CD4-positive, alpha-beta T cell (primary cell): ENCODE measurements at regions of chr16 and their contacts with region 1.

Region 1: GRCh38 chr16:11619327-11619851 is 32.7 kb upstream of the LITAF start:
- DNase-seq: peak in 12 of 14 experiments; percentile 10 to 82 (median 36)
- ATAC-seq: peak; percentile 40
- H3K4me3 ChIP-seq: peak overlapping the region; percentile 1
- H3K4me3 Mint-ChIP-seq: peak overlapping the region; percentile 78
- H3K27ac ChIP-seq: peak overlapping the region; percentile 51 to 62
- H3K27ac Mint-ChIP-seq: peak overlapping the region; percentile 99
- H3K4me1 ChIP-seq: peaks cover 76% of the 10 kb centered on the region
- H3K4me1 Mint-ChIP-seq: peaks cover 63% of the 10 kb centered on the region
- H3K27me3 ChIP-seq: no peaks in the 10 kb centered on the region
- H3K27me3 Mint-ChIP-seq: no peaks in the 10 kb centered on the region
- CTCF ChIP-seq: no peak

Region 2: GRCh38 chr16:11560701-11561449 is 58.5 kb before region 1 on chr16:
- CTCF ChIA-PET with region 1: interaction called, 3 read pairs
- POLR2A ChIA-PET with region 1: interaction called, 24 read pairs
- intact Hi-C with region 1: loop called (anchors 1 to 5 kb)
- DNase-seq: peak; percentile 58 to 93 (median 67)
- ATAC-seq: peak; percentile 86
- H3K4me3 ChIP-seq: peak overlapping the region; percentile 53
- H3K4me3 Mint-ChIP-seq: peak overlapping the region; percentile 49
- H3K27ac ChIP-seq: peak overlapping the region; percentile 86 to 87
- H3K27ac Mint-ChIP-seq: peak overlapping the region; percentile 94
- H3K4me1 ChIP-seq: peaks cover 90% of the 10 kb centered on the region
- H3K4me1 Mint-ChIP-seq: peaks cover 83% of the 10 kb centered on the region
- H3K27me3 ChIP-seq: no peaks in the 10 kb centered on the region
- H3K27me3 Mint-ChIP-seq: no peaks in the 10 kb centered on the region
- CTCF ChIP-seq: no peak

Region 3: GRCh38 chr16:11586856-11587642 is 32.3 kb before region 1 on chr16 and contains the start of gene LITAF:
- CTCF ChIA-PET with region 1: no interaction called
- POLR2A ChIA-PET with region 1: interaction called, 55 read pairs
- intact Hi-C with region 1: loop called (anchors 1 to 5 kb)
- DNase-seq: peak; percentile 22 to 73 (median 52)
- ATAC-seq: peak; percentile 45
- H3K4me3 ChIP-seq: peak within 1 kb of the TSS; percentile 96
- H3K4me3 Mint-ChIP-seq: peak within 1 kb of the TSS; percentile 95
- H3K27ac ChIP-seq: peak within 1 kb of the TSS; percentile 80 to 82
- H3K27ac Mint-ChIP-seq: peak within 1 kb of the TSS; percentile 97
- H3K4me1 ChIP-seq: peaks cover 48% of the 10 kb centered on the region
- H3K4me1 Mint-ChIP-seq: peaks cover 53% of the 10 kb centered on the region
- H3K27me3 ChIP-seq: no peaks in the 10 kb centered on the region
- H3K27me3 Mint-ChIP-seq: no peaks in the 10 kb centered on the region
- CTCF ChIP-seq: no peak
- total RNA-seq, gene LITAF: 226 to 257 TPM

Region 4: DNA sequence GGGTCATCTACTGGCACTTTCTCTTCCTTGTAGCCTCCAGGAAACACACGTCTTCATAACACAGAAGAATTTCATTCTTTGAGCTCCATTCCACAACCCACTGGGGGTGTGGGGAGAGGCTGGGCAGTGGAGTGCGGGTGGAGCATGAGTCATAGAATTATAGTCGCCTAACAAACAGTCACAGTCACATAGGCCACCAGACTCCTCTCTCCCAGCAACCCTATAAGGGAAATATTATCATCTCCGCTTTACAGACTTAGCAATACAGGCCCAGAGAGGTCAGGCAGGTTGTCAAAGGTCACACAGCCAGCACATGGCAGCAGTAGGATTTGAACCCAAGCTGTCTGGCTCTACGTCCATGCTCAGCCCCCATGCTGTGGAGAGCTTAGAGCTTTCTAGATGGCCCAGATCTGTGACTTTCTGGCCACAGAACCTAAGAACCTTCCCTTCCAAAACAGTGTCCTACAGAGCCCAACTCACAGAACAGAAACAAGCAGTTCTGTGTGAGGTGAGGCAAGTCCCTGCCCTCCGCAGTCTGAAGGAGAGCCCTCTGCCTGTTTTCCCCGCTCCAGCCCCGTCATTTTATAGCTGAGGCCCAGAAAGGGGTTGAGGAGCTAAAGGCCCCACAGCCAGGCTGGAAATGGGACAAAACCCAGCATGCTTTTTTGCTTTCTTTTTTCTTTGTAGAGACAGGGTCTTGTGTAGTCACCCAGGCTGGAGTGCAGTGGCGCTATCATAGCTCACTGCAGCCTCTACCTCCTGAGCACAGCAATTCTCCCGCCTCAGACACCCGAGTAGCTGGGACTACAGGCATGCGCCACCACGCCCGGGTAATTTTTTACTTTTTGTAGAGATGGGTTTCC is 21.9 kb before region 1 on chr16:
- CTCF ChIA-PET with region 1: no interaction called
- POLR2A ChIA-PET with region 1: interaction called, 10 read pairs
- intact Hi-C with region 1: no loop called
- DNase-seq: peak in 3 of 14 experiments; percentile 52 to 68 (median 57)
- ATAC-seq: peak; percentile 79
- H3K4me3 ChIP-seq: no peak overlapping the region
- H3K4me3 Mint-ChIP-seq: no peak overlapping the region
- H3K27ac ChIP-seq: peak overlapping the region in 1 of 2 donors; percentile 4
- H3K27ac Mint-ChIP-seq: peak overlapping the region; percentile 35
- H3K4me1 ChIP-seq: peaks cover 20% of the 10 kb centered on the region
- H3K4me1 Mint-ChIP-seq: peaks cover 29% of the 10 kb centered on the region
- H3K27me3 ChIP-seq: no peaks in the 10 kb centered on the region
- H3K27me3 Mint-ChIP-seq: no peaks in the 10 kb centered on the region
- CTCF ChIP-seq: no peak

Region 5: DNA sequence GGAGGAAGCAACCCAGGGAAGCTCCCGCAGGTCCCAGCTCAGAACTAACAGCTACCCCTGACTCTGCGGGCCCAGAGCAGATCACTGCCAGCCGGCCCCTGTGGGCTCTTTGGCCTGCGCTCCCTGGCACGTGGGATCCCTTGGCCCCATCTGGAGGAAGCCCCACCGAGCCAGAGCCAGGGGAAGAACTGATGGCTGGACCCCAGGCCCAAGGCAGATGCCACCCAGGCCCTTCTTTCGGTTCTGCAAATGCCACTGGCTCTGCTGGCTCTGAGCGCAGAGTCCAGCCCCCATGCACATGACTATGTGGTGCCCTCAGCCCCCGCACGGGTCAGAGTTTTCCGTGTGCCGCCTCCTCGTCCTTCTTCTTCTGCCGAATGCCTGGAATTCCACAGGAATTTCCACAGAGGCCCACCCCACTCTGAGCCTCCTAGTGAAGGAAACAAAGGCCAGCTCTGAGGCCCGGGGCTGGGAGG is 13.1 kb after region 1 on chr16:
- CTCF ChIA-PET with region 1: no interaction called
- POLR2A ChIA-PET with region 1: interaction called, 18 read pairs
- intact Hi-C with region 1: no loop called
- DNase-seq: peak in 1 of 14 experiments; percentile 25
- ATAC-seq: no peak
- H3K4me3 ChIP-seq: no peak overlapping the region
- H3K4me3 Mint-ChIP-seq: no peak overlapping the region
- H3K27ac ChIP-seq: no peak overlapping the region
- H3K27ac Mint-ChIP-seq: no peak overlapping the region
- H3K4me1 ChIP-seq: peaks cover 21% of the 10 kb centered on the region
- H3K4me1 Mint-ChIP-seq: peaks cover 38% of the 10 kb centered on the region
- H3K27me3 ChIP-seq: no peaks in the 10 kb centered on the region
- H3K27me3 Mint-ChIP-seq: no peaks in the 10 kb centered on the region
- CTCF ChIP-seq: no peak

Region 6: GRCh38 chr16:11667824-11668622 is 48.6 kb after region 1 on chr16 and contains the start of gene SNN:
- CTCF ChIA-PET with region 1: no interaction called
- POLR2A ChIA-PET with region 1: interaction called, 16 read pairs
- intact Hi-C with region 1: no loop called
- DNase-seq: peak; percentile 72 to 94 (median 84)
- ATAC-seq: peak; percentile 84
- H3K4me3 ChIP-seq: peak within 1 kb of the TSS; percentile 62
- H3K4me3 Mint-ChIP-seq: peak within 1 kb of the TSS; percentile 97
- H3K27ac ChIP-seq: peak within 1 kb of the TSS; percentile 57
- H3K27ac Mint-ChIP-seq: peak within 1 kb of the TSS; percentile 94
- H3K4me1 ChIP-seq: peaks cover 88% of the 10 kb centered on the region
- H3K4me1 Mint-ChIP-seq: peaks cover 73% of the 10 kb centered on the region
- H3K27me3 ChIP-seq: no peaks in the 10 kb centered on the region
- H3K27me3 Mint-ChIP-seq: no peaks in the 10 kb centered on the region
- CTCF ChIP-seq: no peak
- total RNA-seq, gene SNN: 76.3 to 79.7 TPM

Region 7: DNA sequence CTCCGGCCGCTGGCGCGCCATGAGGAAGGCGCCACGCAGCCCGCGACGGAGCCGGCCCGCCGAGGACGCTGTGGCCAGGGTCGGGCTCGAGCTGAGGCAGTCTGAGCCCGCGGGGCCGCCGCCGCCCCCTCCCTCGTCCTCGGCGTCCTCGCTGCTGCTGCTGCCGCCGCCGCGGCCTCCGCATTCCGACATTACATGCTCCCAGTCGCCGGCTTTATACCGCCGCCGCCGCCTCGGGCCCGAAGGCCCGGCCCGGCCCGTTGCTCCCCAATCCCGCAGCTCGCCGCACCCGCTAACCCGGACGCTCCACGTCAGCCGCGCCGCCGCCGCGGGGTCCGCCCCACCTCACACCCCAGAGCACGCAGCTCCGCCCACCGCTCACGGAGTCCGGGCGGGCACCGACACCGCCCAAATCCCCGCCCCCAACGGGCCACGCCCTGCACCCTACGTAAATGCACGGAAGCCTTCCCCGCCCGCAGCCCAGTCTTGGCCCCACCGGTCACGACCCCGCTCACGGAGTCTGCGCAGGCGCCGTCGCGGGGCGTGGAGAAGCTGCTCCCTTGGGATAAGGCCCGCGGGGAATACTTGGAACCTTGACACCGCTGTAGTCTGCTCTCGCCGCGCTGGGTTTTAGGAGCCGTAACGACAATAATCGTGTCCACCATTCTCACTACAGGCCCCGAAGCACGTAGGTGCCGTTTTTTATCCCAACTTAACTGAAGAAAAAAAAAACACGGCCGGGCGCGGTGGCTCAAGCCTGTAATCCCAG is 123.3 kb after region 1 on chr16 and contains the start of gene TXNDC11:
- CTCF ChIA-PET with region 1: no interaction called
- POLR2A ChIA-PET with region 1: interaction called, 22 read pairs
- intact Hi-C with region 1: no loop called
- DNase-seq: peak; percentile 98 to 100 (median 99)
- ATAC-seq: peak; percentile 92
- H3K4me3 ChIP-seq: peak within 1 kb of the TSS; percentile 95
- H3K4me3 Mint-ChIP-seq: peak within 1 kb of the TSS; percentile 96
- H3K27ac ChIP-seq: peak within 1 kb of the TSS; percentile 86 to 92
- H3K27ac Mint-ChIP-seq: peak within 1 kb of the TSS; percentile 99
- H3K4me1 ChIP-seq: peaks cover 52% of the 10 kb centered on the region
- H3K4me1 Mint-ChIP-seq: peaks cover 60% of the 10 kb centered on the region
- H3K27me3 ChIP-seq: no peaks in the 10 kb centered on the region
- H3K27me3 Mint-ChIP-seq: no peaks in the 10 kb centered on the region
- CTCF ChIP-seq: no peak
- total RNA-seq, gene TXNDC11: 111 to 112 TPM